ENCODE measurements at regions of chr15 and their contacts with region 1.

Region 1: GRCh38 chr15:85330901-85331588 is 49.4 kb upstream of the AKAP13 start:
- DNase-seq: peak; percentile 93 to 95
- ATAC-seq: peak; percentile 92 to 96
- H3K4me3 ChIP-seq: peak overlapping the region; percentile 44; the same call in 2 of the 3 replicates
- H3K27ac ChIP-seq: peak overlapping the region; percentile 78 to 85
- H3K4me1 ChIP-seq: peaks cover 26% of the 10 kb centered on the region
- CTCF ChIP-seq: peak; percentile 98
- EP300 ChIP-seq: no peak
- POLR2A ChIP-seq: no peak
- RAD21 ChIP-seq: peak; percentile 99 to 100

Region 2: DNA sequence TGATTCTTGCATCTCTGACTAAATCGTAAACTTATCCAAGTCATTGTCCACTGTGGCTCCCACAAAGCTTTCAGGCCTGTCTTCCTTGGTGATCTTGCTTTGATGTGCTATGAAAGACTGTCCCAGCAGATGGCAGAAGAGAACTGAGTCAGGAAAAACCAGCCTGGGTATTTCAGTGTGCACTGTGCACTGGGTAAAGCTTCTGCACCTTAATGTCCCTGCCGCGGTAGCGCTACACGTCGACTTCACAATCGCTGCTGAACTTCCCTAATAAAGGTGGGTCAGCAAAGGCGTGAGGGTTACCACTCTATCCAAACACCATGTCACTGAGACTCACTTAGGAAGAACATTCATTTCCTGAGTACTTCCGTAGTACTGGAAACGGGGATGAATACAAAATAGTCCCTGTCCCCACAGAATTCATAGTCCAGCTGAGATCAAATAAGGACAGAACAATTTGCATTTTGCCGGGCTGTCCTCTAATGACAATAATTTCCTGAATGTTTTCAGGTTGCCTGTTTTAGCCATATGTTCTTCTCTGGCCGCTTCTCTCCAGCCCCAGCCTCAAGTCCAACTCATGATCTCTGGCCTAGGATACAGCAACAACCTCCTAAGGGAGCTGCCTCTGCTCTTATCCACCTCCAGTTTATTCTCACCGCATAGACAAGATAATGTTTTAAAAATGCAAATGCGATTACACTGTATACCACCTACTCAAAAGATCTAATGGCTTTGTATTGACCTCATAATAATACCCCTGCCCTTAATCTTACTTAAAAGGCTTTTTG is 34.2 kb before region 1 on chr15:
- CTCF ChIA-PET with region 1: interaction called, 104 read pairs
- POLR2A ChIA-PET with region 1: no interaction called
- DNase-seq: peak; percentile 86 to 90
- ATAC-seq: peak; percentile 98
- H3K4me3 ChIP-seq: no peak overlapping the region
- H3K27ac ChIP-seq: peak overlapping the region; percentile 53 to 60; a peak in 5 of 6 replicates
- H3K4me1 ChIP-seq: peaks cover 5% of the 10 kb centered on the region; the same call in 2 of the 3 replicates
- CTCF ChIP-seq: peak; percentile 98
- EP300 ChIP-seq: no peak
- POLR2A ChIP-seq: no peak
- RAD21 ChIP-seq: peak; percentile 97 to 99

Region 3: DNA sequence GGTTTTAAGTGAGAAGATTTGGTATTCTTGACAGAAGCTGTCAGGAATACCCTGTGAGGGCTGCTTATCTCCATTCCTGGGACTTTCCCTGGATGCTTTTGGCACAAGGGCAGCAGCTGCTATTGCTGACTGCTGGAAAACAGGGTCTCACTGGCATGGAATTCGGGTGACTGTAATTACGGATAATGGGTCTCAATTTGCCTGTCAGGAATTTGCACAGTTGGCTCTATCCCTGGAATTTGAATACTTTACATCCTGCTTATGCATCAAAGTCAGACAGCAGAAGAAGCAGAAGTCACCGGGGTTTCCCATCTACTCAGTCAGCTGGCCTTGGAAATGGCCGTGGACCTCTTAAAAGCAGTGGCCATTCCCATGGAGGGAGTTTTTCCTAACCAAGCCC is 23.4 kb after region 1 on chr15:
- CTCF ChIA-PET with region 1: interaction called, 12 read pairs
- POLR2A ChIA-PET with region 1: no interaction called
- DNase-seq: no peak
- ATAC-seq: peak in 1 of 2 experiments; percentile 8; a peak in 3 of 6 replicates
- H3K4me3 ChIP-seq: no peak overlapping the region
- H3K27ac ChIP-seq: peak overlapping the region; percentile 14 to 61; a peak in 4 of 6 replicates
- H3K4me1 ChIP-seq: peaks cover 35% of the 10 kb centered on the region
- CTCF ChIP-seq: no peak
- EP300 ChIP-seq: no peak
- POLR2A ChIP-seq: no peak
- RAD21 ChIP-seq: no peak

Region 4: DNA sequence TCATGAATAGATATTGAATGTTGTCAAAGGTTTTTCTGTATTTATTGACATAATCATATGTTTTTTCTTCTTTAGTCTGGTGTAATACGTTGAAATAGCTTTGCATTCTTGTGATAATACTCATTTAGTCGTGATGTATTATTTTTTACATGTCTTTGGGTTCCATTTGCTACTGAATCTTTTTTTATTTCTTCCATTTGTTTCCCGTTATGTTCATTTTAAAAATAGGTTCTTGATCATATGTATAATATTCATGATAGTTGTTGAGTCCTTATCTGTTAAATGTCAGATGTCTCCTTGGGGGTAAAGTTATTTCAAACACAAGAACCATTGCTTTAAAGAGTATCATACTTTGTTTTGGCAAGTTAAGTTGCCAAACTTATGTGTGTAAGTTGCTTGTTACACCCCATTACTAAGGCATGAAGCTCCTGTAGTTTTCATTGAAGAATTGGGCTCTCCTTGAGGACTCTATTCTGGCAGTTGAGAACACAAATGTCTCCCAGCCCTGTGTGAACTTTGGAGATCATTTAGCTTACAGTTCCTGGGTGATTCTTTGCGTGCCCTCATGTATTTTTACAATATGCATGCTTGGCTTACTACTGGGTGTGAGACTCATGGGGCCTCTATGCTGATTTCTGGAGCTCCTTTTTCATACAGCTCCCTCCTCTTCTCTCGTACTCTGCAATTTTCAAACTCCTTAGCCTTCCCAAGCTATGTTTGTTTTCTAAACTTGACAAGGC is 57.7 kb after region 1 on chr15:
- CTCF ChIA-PET with region 1: interaction called, 14 read pairs
- POLR2A ChIA-PET with region 1: no interaction called
- DNase-seq: no peak
- ATAC-seq: no peak
- H3K4me3 ChIP-seq: no peak overlapping the region
- H3K27ac ChIP-seq: no peak overlapping the region
- H3K4me1 ChIP-seq: peaks cover 40% of the 10 kb centered on the region
- CTCF ChIP-seq: no peak
- EP300 ChIP-seq: no peak
- POLR2A ChIP-seq: no peak
- RAD21 ChIP-seq: no peak

Region 5: GRCh38 chr15:85423256-85423655 is 92.2 kb after region 1 on chr15:
- CTCF ChIA-PET with region 1: interaction called, 10 read pairs
- POLR2A ChIA-PET with region 1: no interaction called
- DNase-seq: no peak
- ATAC-seq: no peak
- H3K4me3 ChIP-seq: no peak overlapping the region
- H3K27ac ChIP-seq: no peak overlapping the region
- H3K4me1 ChIP-seq: peaks cover 43% of the 10 kb centered on the region
- CTCF ChIP-seq: no peak
- EP300 ChIP-seq: no peak
- POLR2A ChIP-seq: no peak
- RAD21 ChIP-seq: no peak

Region 6: DNA sequence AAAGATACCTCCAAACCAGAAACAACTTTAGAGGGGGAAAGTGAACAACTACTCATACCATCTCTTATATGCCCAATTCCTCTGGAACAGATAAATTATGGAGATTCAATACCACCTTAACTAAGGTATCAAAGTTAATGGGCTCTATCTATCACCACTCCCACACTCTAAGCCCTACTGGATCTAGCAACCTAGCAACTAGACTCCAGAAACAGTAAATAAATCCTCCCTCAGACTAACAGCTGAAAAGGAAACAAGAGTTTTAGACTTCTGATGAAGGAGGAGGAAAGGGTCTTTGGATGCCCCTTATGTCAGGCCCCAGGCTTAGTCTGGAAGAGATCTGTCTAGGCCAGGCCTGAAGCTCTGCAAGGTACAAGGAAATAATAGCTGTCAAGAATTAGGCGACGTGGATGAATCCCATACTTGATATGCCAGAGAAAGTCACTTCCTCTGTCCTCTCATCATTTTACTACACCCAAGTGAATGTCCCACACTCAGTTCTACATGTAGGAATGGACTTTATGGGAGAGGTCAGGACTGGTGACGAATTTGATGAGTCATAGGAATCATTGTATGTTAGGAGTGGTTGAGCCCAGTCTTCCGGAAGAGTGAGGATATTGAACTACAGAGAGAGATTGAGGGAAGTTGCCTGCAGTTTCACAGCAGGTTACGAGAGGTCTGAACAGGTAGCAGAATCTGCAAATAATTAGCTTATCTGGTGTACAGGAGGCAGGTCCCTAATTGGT is 163.2 kb after region 1 on chr15:
- CTCF ChIA-PET with region 1: interaction called, 19 read pairs
- POLR2A ChIA-PET with region 1: no interaction called
- DNase-seq: peak; percentile 91 to 92
- ATAC-seq: peak; percentile 96 to 97
- H3K4me3 ChIP-seq: no peak overlapping the region
- H3K27ac ChIP-seq: peak overlapping the region; percentile 47 to 81
- H3K4me1 ChIP-seq: peaks cover 57% of the 10 kb centered on the region
- CTCF ChIP-seq: no peak
- EP300 ChIP-seq: no peak
- POLR2A ChIP-seq: no peak
- RAD21 ChIP-seq: no peak

Measured in A549 (cell line).